ENCODE measurements at regions of chr9 and their contacts with region 1.

Region 1: GRCh38 chr9:137423004-137423874 is at the starts of genes EXD3 and NOXA1:
- DNase-seq: peak; percentile 55 to 96
- ATAC-seq: peak; percentile 84 to 90
- H3K4me3 ChIP-seq: peak within 1 kb of the TSS; percentile 94
- H3K27ac ChIP-seq: peak within 1 kb of the TSS; percentile 90 to 94
- H3K4me1 ChIP-seq: peaks cover 15% of the 10 kb centered on the region; the same call in 2 of the 3 replicates
- CTCF ChIP-seq: peak; percentile 97
- EP300 ChIP-seq: 0 out of 5 replicates have a peak, but pooled peaks of 1 of the 2 experiments have one; percentile 19
- POLR2A ChIP-seq: peak; percentile 36; the same call in 1 of the 2 replicates
- RAD21 ChIP-seq: peak; percentile 38 to 72; a peak in 4 of 5 replicates
- polyA plus RNA-seq, gene EXD3: 3.3 and 3.4 TPM in 2 replicates
- polyA plus RNA-seq, gene NOXA1: 0.44 and 0.58 TPM in 2 replicates

Region 2: DNA sequence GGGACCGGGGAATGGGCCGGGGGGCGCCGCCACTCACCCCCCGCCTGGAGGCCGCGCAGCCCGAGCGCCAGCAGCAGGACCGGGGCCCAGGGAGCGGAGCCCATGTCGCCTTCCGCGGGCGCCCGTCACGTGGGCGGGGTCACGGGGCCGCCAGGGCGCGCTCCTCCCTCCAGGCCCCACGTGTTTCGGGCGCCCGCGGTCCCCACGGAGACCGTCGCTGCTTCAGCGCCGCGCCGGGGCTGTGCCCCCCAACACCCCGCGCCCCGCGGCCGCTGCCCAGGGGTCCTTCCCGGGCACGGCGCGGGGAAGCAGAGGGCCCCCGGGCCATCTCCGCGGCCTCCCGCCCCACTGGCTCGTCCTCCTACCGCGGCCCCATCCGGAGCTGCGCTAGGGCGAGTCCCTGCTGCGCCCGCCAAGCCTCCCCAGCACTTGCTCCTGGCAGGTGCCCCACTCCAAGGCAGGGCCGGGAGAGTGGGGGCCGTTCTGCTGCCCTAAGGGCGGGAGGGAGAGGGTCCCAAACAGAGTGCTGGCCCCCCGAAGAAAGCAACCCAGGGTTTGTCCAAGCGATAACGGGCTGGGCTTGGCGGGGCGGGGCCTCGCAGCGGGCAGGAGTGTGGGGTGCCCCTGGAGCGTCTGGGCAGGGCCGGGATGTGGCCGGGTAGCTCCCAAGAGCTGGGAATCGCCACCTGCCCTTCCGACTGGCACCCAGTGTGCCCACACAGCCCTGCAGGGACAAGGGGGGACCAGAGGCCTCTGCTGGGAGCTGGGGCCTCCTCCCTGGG is 308.4 kb before region 1 on chr9 and contains the start of gene DPP7:
- CTCF ChIA-PET with region 1: no interaction called
- POLR2A ChIA-PET with region 1: no interaction called
- DNase-seq: peak; percentile 59 to 76
- ATAC-seq: peak; percentile 78 to 79
- H3K4me3 ChIP-seq: peak within 1 kb of the TSS; percentile 69
- H3K27ac ChIP-seq: peak within 1 kb of the TSS; percentile 96 to 97
- H3K4me1 ChIP-seq: peaks cover 6% of the 10 kb centered on the region; the same call in 2 of the 3 replicates
- CTCF ChIP-seq: no peak
- EP300 ChIP-seq: no peak
- POLR2A ChIP-seq: peak; percentile 65
- RAD21 ChIP-seq: no peak
- polyA plus RNA-seq, gene DPP7: 27.6 and 36.0 TPM in 2 replicates

Region 3: GRCh38 chr9:137302176-137302994 is 120.9 kb before region 1 on chr9 and contains the start of gene NRARP:
- CTCF ChIA-PET with region 1: interaction called, 24 read pairs
- POLR2A ChIA-PET with region 1: interaction called, 9 read pairs
- DNase-seq: peak; percentile 77 to 89
- ATAC-seq: peak; percentile 54 to 61
- H3K4me3 ChIP-seq: peak within 1 kb of the TSS; percentile 49
- H3K27ac ChIP-seq: peak within 1 kb of the TSS; percentile 58 to 90
- H3K4me1 ChIP-seq: peaks cover 19% of the 10 kb centered on the region
- CTCF ChIP-seq: peak; percentile 90
- EP300 ChIP-seq: no peak
- POLR2A ChIP-seq: peak; percentile 97
- RAD21 ChIP-seq: peak; percentile 16 to 40; a peak in 3 of 5 replicates
- polyA plus RNA-seq, gene NRARP: 3.2 and 5.1 TPM in 2 replicates

Region 4: DNA sequence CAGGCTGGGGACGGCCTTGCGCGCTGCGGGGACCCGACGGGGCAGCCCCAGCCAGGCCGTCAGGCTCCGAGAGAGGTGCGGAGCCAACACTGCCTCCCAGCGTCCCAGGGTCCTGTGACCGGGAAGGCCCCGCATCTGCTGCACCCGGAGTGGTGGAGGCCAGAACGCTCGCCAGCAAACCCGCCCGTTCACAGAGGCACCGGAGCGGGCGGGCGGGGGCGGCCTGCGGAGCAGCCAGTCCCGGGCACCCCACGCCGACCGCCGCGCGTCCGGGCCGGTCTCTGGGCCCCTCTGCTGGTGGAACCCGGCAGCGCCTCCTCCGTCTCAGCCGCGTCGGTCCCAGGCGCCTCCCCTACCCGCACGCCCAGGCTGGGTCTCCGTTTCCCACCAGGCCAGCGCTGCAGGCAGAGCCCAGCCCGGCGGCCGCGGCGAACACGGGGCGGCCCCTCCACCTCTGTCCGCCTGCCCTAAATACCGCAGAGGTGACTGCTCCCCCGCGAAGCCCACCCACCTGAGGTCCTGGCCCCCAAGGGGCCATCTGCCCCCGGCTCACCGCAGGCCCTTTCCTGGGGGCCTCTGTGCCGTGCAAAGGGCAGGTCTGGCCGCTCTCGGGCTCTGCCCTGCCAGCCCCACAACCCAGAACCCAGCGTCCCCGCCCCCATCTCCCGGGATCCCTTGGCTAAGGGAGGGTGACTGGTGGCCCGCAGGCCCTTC is 16.2 kb before region 1 on chr9:
- CTCF ChIA-PET with region 1: interaction called, 48 read pairs
- POLR2A ChIA-PET with region 1: interaction called, 13 read pairs
- DNase-seq: peak; percentile 60 to 64
- ATAC-seq: peak; percentile 77 to 90
- H3K4me3 ChIP-seq: peak overlapping the region; percentile 35
- H3K27ac ChIP-seq: peak overlapping the region; percentile 58 to 82; a peak in 5 of 6 replicates
- H3K4me1 ChIP-seq: peaks cover 31% of the 10 kb centered on the region
- CTCF ChIP-seq: peak; percentile 72
- EP300 ChIP-seq: no peak
- POLR2A ChIP-seq: no peak
- RAD21 ChIP-seq: peak; percentile 69 to 87; a peak in 4 of 5 replicates

Region 5: GRCh38 chr9:137445275-137445807 is 22.1 kb after region 1 on chr9:
- CTCF ChIA-PET with region 1: interaction called, 98 read pairs
- POLR2A ChIA-PET with region 1: interaction called, 6 read pairs
- DNase-seq: peak; percentile 75 to 77
- ATAC-seq: peak; percentile 63 to 73
- H3K4me3 ChIP-seq: no peak overlapping the region
- H3K27ac ChIP-seq: peak overlapping the region in 1 of 2 experiments; percentile 48; a peak in 1 of 6 replicates
- H3K4me1 ChIP-seq: peaks cover 10% of the 10 kb centered on the region
- CTCF ChIP-seq: peak; percentile 79
- EP300 ChIP-seq: no peak
- POLR2A ChIP-seq: no peak
- RAD21 ChIP-seq: peak; percentile 62 to 66